Vagina (tissue), 2 donors: ENCODE measurements at regions of chr2 and their contacts with region 1.

Region 1: GRCh38 chr2:237256887-237257286 is 157.1 kb downstream of the COL6A3 start:
- DNase-seq: no peak
- H3K4me3 ChIP-seq: no peak overlapping the region
- H3K27ac ChIP-seq: peak overlapping the region; percentile 89
- H3K4me1 ChIP-seq: peaks cover 45% of the 10 kb centered on the region
- H3K27me3 ChIP-seq: no peaks in the 10 kb centered on the region
- CTCF ChIP-seq: no peak
- POLR2A ChIP-seq: no peak

Region 2: GRCh38 chr2:237181844-237182243 is 75.0 kb before region 1 on chr2:
- intact Hi-C with region 1: loop called (anchors 10 kb)
- DNase-seq: peak in 1 of 2 donors; percentile 93
- H3K4me3 ChIP-seq: no peak overlapping the region
- H3K27ac ChIP-seq: peak overlapping the region; percentile 75
- H3K4me1 ChIP-seq: peaks cover 4% of the 10 kb centered on the region
- H3K27me3 ChIP-seq: no peaks in the 10 kb centered on the region
- CTCF ChIP-seq: no peak
- POLR2A ChIP-seq: no peak